Activated CD4-positive, alpha-beta memory T cell treated with anti-CD3 and anti-CD28 coated beads for 36 hours (primary cell): ENCODE measurements at regions of chr1 and their contacts with region 1.

Region 1: DNA sequence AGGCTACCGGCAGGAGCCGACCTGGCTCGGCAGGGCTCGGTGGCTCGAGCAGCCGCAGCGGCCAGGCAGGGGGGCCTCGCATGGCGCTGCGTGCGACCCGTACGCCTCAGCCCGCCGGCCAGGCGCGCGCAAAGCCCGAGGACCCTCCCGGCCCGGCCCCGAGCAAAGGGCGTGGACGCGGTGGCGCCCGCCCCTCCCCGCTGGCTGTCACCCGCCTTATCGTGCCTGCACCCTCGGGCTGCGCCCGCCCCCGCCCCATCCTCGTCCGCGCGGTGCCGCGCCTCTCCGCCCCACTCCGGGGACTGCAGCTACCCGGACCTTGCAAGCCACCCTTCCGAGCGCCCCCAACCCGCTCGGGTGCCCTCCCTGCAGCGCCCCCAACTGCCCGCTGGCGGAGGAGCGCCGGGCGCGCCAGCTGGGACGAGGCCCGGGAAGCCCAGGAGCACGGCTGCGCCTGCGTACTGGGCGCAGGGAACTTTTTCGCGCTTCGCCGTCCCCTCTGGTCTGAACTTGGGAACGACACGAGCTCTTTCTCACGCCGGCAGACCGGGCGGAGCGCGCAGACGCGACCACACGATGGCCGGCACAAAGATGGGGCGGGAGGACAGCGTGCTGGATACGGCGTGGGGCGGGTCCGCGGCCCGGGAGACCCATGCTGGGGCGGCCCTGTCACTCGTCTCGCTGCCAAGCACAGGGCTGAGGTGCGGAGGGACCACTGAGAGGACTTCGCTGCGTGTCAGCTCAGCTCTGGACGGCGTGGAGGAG is at the start of gene ABCB10:
- DNase-seq: peak; percentile 95
- H3K4me3 Mint-ChIP-seq: peak within 1 kb of the TSS; percentile 91
- H3K27ac Mint-ChIP-seq: peak within 1 kb of the TSS; percentile 87
- H3K4me1 Mint-ChIP-seq: peaks cover 37% of the 10 kb centered on the region
- H3K27me3 Mint-ChIP-seq: no peaks in the 10 kb centered on the region
- total RNA-seq, gene ABCB10: 30.8 to 31.0 TPM

Region 2: GRCh38 chr1:229270547-229271447 is 288.0 kb before region 1 on chr1 and contains the start of gene RAB4A:
- CTCF ChIA-PET with region 1: no interaction called
- POLR2A ChIA-PET with region 1: no interaction called
- intact Hi-C with region 1: loop called (anchors 5 kb)
- DNase-seq: peak; percentile 79
- H3K4me3 Mint-ChIP-seq: peak within 1 kb of the TSS; percentile 86
- H3K27ac Mint-ChIP-seq: peak within 1 kb of the TSS; percentile 43
- H3K4me1 Mint-ChIP-seq: peaks cover 34% of the 10 kb centered on the region
- H3K27me3 Mint-ChIP-seq: no peaks in the 10 kb centered on the region
- total RNA-seq, gene RAB4A: 22.9 to 25.9 TPM

Region 3: GRCh38 chr1:229440851-229441537 is 117.8 kb before region 1 on chr1:
- CTCF ChIA-PET with region 1: no interaction called
- POLR2A ChIA-PET with region 1: interaction called, 3 read pairs
- intact Hi-C with region 1: loop called (anchors 1 kb)
- DNase-seq: no peak
- H3K4me3 Mint-ChIP-seq: no peak overlapping the region
- H3K27ac Mint-ChIP-seq: peak overlapping the region; percentile 56
- H3K4me1 Mint-ChIP-seq: peaks cover 22% of the 10 kb centered on the region
- H3K27me3 Mint-ChIP-seq: peaks cover 17% of the 10 kb centered on the region

Region 4: GRCh38 chr1:229537894-229538293 is 20.9 kb before region 1 on chr1:
- CTCF ChIA-PET with region 1: no interaction called
- POLR2A ChIA-PET with region 1: interaction called, 5 read pairs
- intact Hi-C with region 1: loop called (anchors 1 kb)
- DNase-seq: no peak
- H3K4me3 Mint-ChIP-seq: no peak overlapping the region
- H3K27ac Mint-ChIP-seq: no peak overlapping the region
- H3K4me1 Mint-ChIP-seq: peaks cover 15% of the 10 kb centered on the region
- H3K27me3 Mint-ChIP-seq: no peaks in the 10 kb centered on the region

Region 5: GRCh38 chr1:230104395-230105244 is 545.9 kb after region 1 on chr1:
- CTCF ChIA-PET with region 1: no interaction called
- POLR2A ChIA-PET with region 1: interaction called, 3 read pairs
- intact Hi-C with region 1: loop called (anchors 5 kb)
- DNase-seq: peak; percentile 95
- H3K4me3 Mint-ChIP-seq: peak overlapping the region; percentile 66
- H3K27ac Mint-ChIP-seq: peak overlapping the region; percentile 86
- H3K4me1 Mint-ChIP-seq: peaks cover 80% of the 10 kb centered on the region
- H3K27me3 Mint-ChIP-seq: no peaks in the 10 kb centered on the region